SK-N-SH (cell line): ENCODE measurements at regions of chr12 and their contacts with region 1.

Region 1: GRCh38 chr12:48851883-48852733 is at the start of gene DDX23:
- DNase-seq: peak; percentile 97
- H3K4me3 ChIP-seq: peak within 1 kb of the TSS; percentile 85 to 92
- H3K27ac ChIP-seq: peak within 1 kb of the TSS; percentile 61 to 85
- H3K4me1 ChIP-seq: peaks cover 0 to 13% of the 10 kb centered on the region in 2 experiments; a peak in 2 of 4 replicates
- H3K27me3 ChIP-seq: no peaks in the 10 kb centered on the region
- CTCF ChIP-seq: no peak
- EP300 ChIP-seq: peak in 1 of 2 experiments; percentile 25; a peak in 1 of 4 replicates
- RAD21 ChIP-seq: no peak
- polyA plus RNA-seq, gene DDX23: 50.4 and 52.5 TPM in 2 replicates

Region 2: GRCh38 chr12:48832321-48833060 is 19.6 kb before region 1 on chr12:
- CTCF ChIA-PET with region 1: interaction called, 16 read pairs
- POLR2A ChIA-PET with region 1: interaction called, 3 read pairs
- DNase-seq: no peak
- H3K4me3 ChIP-seq: no peak overlapping the region
- H3K27ac ChIP-seq: no peak overlapping the region
- H3K4me1 ChIP-seq: no peaks in the 10 kb centered on the region
- H3K27me3 ChIP-seq: no peaks in the 10 kb centered on the region
- CTCF ChIP-seq: no peak
- EP300 ChIP-seq: no peak
- RAD21 ChIP-seq: no peak

Region 3: DNA sequence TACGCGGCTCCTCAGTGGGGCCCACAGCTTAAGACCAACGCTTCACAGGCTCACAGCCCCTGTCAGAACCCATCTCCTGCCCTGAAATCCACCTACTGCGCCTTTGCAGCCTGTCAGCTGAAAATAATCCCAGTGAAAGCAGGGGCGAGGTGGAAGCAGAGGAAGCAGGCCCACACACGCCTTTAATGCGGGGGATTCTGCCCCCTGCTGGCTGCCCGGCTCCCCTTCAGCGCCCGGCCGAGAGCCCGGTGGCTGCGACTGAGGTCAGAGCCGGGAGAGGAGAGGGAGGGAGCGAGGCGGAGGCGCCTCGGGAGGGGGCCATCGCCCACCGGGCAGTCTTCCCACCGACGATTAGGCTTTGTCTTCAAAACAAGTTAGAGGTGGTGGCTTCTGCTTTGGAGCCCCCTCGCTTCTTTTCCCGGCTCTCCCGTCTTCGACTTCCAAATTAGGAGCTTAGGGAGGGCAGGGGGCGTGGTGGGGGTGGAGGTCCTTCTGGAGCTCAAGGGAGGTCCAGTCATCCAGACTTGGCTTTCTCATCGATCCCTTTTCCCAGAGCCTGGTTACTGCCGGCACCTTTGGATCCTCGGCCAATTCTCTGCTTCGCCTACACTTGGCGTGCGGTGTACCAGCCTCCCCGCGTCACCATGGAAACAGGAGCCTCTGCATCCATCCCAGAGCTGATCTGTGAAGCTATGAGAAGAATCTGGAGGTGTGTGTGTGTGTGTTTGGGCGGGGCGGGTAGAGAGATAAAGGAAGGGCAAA is 38.7 kb after region 1 on chr12:
- CTCF ChIA-PET with region 1: interaction called, 667 read pairs
- POLR2A ChIA-PET with region 1: interaction called, 31 read pairs
- DNase-seq: peak; percentile 86
- H3K4me3 ChIP-seq: peak overlapping the region; percentile 39 to 63
- H3K27ac ChIP-seq: no peak overlapping the region
- H3K4me1 ChIP-seq: peaks cover 0 to 2% of the 10 kb centered on the region in 2 experiments; a peak in 1 of 4 replicates
- H3K27me3 ChIP-seq: no peaks in the 10 kb centered on the region; the same call in 1 of the 2 replicates
- CTCF ChIP-seq: peak; percentile 92
- EP300 ChIP-seq: no peak
- RAD21 ChIP-seq: peak; percentile 84

Region 4: DNA sequence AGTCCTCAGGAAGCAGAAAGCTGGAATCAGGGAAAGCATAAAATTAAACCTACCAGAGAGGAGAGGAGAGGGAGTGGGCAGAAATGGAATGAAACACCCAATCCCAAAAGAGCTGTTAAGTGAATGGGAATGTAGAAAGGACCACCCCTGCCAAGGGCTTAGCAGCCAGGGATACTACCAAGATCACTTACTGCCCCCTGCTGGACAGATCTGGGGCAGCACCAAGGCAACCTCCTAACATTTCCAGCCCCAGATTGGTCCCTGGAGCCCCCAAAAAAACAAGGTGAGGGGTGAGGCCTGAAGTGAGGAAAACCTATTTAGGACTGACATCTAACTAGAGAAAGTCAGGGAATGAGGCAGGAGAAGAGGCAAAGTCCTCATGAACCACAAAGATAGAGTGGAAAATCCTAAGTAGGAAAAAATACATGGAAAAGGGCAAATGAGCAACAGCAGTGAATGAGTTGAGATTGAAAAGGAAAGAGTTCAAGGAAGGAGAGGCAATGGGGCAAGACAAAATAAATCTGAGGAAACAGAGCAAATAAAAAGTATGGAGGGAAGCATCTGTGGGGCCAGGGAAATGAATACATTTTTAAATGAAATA is 84.4 kb after region 1 on chr12:
- CTCF ChIA-PET with region 1: interaction called, 30 read pairs
- POLR2A ChIA-PET with region 1: no interaction called
- DNase-seq: peak; percentile 88
- H3K4me3 ChIP-seq: peak overlapping the region in 1 of 2 experiments; percentile 31; a peak in 1 of 4 replicates
- H3K27ac ChIP-seq: no peak overlapping the region
- H3K4me1 ChIP-seq: no peaks in the 10 kb centered on the region
- H3K27me3 ChIP-seq: no peaks in the 10 kb centered on the region
- CTCF ChIP-seq: peak; percentile 94
- EP300 ChIP-seq: no peak
- RAD21 ChIP-seq: peak; percentile 73

Region 5: GRCh38 chr12:48988030-48988649 is 136.0 kb after region 1 on chr12:
- CTCF ChIA-PET with region 1: interaction called, 20 read pairs
- POLR2A ChIA-PET with region 1: no interaction called
- DNase-seq: peak; percentile 87
- H3K4me3 ChIP-seq: no peak overlapping the region; a peak in 1 of 4 replicates
- H3K27ac ChIP-seq: no peak overlapping the region
- H3K4me1 ChIP-seq: no peaks in the 10 kb centered on the region
- H3K27me3 ChIP-seq: peaks cover 32% of the 10 kb centered on the region
- CTCF ChIP-seq: peak; percentile 88
- EP300 ChIP-seq: no peak
- RAD21 ChIP-seq: peak; percentile 49